B cell (primary cell): ENCODE measurements at regions of chr2 and their contacts with region 1.

Region 1: GRCh38 chr2:216034065-216034464 is 20.7 kb upstream of the MREG start:
- DNase-seq: peak; percentile 81
- ATAC-seq: peak; percentile 85
- H3K4me3 ChIP-seq: no peak overlapping the region
- H3K4me3 Mint-ChIP-seq: no peak overlapping the region
- H3K27ac ChIP-seq: no peak overlapping the region
- H3K27ac Mint-ChIP-seq: no peak overlapping the region
- H3K4me1 ChIP-seq: peaks cover 0 to 5% of the 10 kb centered on the region in 2 donors
- H3K4me1 Mint-ChIP-seq: peaks cover 8% of the 10 kb centered on the region
- H3K27me3 ChIP-seq: no peaks in the 10 kb centered on the region
- H3K27me3 Mint-ChIP-seq: no peaks in the 10 kb centered on the region
- CTCF ChIP-seq: peak; percentile 93

Region 2: DNA sequence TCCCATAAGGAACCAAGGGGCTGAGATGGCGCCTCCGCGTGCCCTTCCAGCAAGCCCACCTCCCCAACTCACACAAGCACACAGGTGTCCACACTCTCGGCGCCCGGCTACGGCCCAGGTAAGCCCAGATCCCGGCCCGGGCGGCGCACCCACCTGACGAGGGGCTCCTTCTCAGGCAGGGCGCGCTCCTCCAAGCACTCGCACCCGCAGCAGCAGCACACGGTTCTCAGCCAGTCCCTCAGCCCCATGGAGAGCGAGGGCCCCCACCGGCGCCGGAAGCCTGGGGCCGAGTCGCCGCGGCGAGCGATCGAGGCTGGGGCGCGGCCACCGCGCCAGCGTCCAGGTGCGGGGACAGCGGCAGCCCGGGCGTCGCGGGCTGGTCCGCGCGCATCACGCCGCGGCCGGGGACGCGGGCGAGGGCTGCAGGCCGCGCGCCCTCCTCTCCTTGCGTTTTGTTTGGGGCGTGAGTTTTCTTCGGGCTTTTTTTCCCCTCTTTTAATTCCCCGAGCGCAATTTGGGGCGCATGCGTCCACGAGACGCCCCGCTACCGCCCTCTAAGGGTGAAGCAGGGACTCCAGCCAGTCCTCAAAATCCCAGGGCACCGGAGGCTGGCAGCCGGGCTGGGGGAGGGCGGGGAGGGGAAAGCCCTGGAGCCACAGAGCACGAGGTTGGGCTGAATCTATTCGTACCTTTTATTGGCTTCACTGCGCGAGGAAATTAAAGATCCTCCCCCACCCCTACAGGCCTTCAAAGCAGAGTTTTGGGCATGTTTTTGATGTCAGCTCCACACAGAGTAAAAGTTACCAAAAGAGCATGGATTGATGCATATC is 20.8 kb before region 1 on chr2 and contains the start of gene MREG:
- CTCF ChIA-PET with region 1: interaction called, 8 read pairs
- POLR2A ChIA-PET with region 1: no interaction called
- intact Hi-C with region 1: loop called (anchors 2 kb)
- DNase-seq: peak; percentile 90
- ATAC-seq: peak; percentile 82
- H3K4me3 ChIP-seq: peak within 1 kb of the TSS; percentile 47 to 80 (median 69)
- H3K4me3 Mint-ChIP-seq: peak within 1 kb of the TSS; percentile 93
- H3K27ac ChIP-seq: peak within 1 kb of the TSS; percentile 20 to 61
- H3K27ac Mint-ChIP-seq: peak within 1 kb of the TSS; percentile 84
- H3K4me1 ChIP-seq: peaks cover 30 to 41% of the 10 kb centered on the region in 2 donors
- H3K4me1 Mint-ChIP-seq: peaks cover 49% of the 10 kb centered on the region
- H3K27me3 ChIP-seq: no peaks in the 10 kb centered on the region
- H3K27me3 Mint-ChIP-seq: no peaks in the 10 kb centered on the region
- CTCF ChIP-seq: peak; percentile 74
- total RNA-seq, gene MREG: 5.7 and 6.3 TPM in 2 replicates

Region 3: DNA sequence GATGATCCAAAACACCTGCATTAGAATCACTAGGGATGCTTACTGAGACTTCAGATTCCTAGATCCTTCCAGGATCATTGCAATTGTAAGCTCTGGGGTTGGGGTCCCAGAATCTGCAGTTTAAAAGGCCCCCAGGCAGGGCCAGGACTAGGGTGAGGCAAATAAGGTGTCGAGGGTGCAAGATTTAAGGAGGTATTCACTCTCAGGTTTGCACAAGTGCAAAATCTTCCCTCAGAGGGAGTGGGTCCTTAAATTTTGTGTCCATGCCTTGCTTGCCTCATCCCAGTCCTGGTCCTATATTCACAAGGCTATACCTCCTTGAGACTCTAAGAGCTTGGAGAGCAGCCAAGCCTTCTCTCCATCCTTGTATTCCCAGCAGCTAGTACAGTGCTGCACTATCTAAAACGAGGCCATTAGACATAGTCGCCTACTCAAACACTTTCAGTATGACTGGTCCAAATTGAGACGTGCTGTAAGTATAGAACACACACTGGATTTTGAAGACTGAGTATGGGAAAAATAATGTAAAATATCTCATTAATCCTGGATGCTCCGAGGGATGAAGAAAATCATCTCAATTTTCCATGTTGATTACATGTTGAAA is 10.9 kb after region 1 on chr2:
- CTCF ChIA-PET with region 1: interaction called, 14 read pairs
- POLR2A ChIA-PET with region 1: no interaction called
- intact Hi-C with region 1: no loop called
- DNase-seq: no peak
- ATAC-seq: no peak
- H3K4me3 ChIP-seq: no peak overlapping the region
- H3K4me3 Mint-ChIP-seq: no peak overlapping the region
- H3K27ac ChIP-seq: no peak overlapping the region
- H3K27ac Mint-ChIP-seq: no peak overlapping the region
- H3K4me1 ChIP-seq: no peaks in the 10 kb centered on the region
- H3K4me1 Mint-ChIP-seq: no peaks in the 10 kb centered on the region
- H3K27me3 ChIP-seq: no peaks in the 10 kb centered on the region
- H3K27me3 Mint-ChIP-seq: no peaks in the 10 kb centered on the region
- CTCF ChIP-seq: no peak

Region 4: GRCh38 chr2:216081487-216082116 is 47.5 kb after region 1 on chr2 and contains the starts of genes PECR and TMEM169:
- CTCF ChIA-PET with region 1: interaction called, 17 read pairs
- POLR2A ChIA-PET with region 1: no interaction called
- intact Hi-C with region 1: no loop called
- DNase-seq: peak; percentile 76
- ATAC-seq: peak; percentile 97
- H3K4me3 ChIP-seq: peak within 1 kb of the TSS; percentile 63 to 87 (median 79)
- H3K4me3 Mint-ChIP-seq: peak within 1 kb of the TSS; percentile 91
- H3K27ac ChIP-seq: peak within 1 kb of the TSS; percentile 51 to 68
- H3K27ac Mint-ChIP-seq: peak within 1 kb of the TSS; percentile 80
- H3K4me1 ChIP-seq: peaks cover 40 to 41% of the 10 kb centered on the region in 2 donors
- H3K4me1 Mint-ChIP-seq: peaks cover 45% of the 10 kb centered on the region
- H3K27me3 ChIP-seq: no peaks in the 10 kb centered on the region
- H3K27me3 Mint-ChIP-seq: no peaks in the 10 kb centered on the region
- CTCF ChIP-seq: no peak
- total RNA-seq, gene PECR: 15.6 and 16.5 TPM in 2 replicates
- total RNA-seq, gene TMEM169: 0.84 and 1.2 TPM in 2 replicates

Region 5: DNA sequence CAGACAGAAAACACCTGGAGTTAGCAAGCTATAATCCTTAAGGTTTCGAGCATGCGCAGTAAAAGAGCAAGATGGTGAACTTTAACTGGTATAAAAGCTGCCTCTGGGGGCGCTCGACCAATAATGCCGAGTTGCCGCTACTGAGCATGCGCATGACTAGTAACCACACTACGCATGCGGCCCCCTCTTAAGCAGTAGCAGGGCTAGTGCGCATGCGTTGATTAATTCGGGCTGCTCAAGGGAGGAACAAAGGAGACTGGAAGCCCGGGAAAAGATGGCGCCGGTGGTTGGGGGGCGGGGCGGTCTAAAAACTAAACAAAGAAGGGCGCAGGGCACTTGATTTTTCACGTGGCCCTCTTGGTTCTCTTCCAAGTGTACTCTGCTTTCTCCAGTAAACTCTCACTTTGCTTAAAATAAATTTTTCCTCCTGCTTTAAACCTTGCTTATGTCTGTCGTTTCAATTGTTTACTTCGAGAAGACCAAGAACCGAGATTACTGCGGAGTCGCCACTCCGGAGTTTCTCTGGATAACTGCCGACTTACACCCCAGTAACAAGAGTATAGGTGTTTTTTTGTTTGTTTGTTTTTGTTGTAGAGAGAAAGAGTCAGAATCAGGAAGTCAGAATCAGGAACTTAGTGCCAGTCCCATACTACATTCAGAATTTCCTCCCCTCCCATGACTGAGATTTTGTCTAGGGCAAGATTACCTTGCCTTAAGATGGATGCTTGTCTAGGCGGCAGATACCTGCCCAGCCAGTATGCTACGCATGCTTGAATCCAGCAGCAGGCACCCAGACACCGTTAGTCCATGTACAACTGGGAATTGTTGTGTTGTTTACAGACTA is 80.9 kb after region 1 on chr2:
- CTCF ChIA-PET with region 1: interaction called, 21 read pairs
- POLR2A ChIA-PET with region 1: no interaction called
- intact Hi-C with region 1: loop called (anchors 1 kb)
- DNase-seq: peak; percentile 99
- ATAC-seq: peak; percentile 90
- H3K4me3 ChIP-seq: peak overlapping the region; percentile 52 to 90 (median 69)
- H3K4me3 Mint-ChIP-seq: peak overlapping the region; percentile 93
- H3K27ac ChIP-seq: peak overlapping the region; percentile 80 to 96
- H3K27ac Mint-ChIP-seq: peak overlapping the region; percentile 98
- H3K4me1 ChIP-seq: peaks cover 32 to 37% of the 10 kb centered on the region in 2 donors
- H3K4me1 Mint-ChIP-seq: peaks cover 71% of the 10 kb centered on the region
- H3K27me3 ChIP-seq: no peaks in the 10 kb centered on the region
- H3K27me3 Mint-ChIP-seq: no peaks in the 10 kb centered on the region
- CTCF ChIP-seq: peak; percentile 88

Region 6: DNA sequence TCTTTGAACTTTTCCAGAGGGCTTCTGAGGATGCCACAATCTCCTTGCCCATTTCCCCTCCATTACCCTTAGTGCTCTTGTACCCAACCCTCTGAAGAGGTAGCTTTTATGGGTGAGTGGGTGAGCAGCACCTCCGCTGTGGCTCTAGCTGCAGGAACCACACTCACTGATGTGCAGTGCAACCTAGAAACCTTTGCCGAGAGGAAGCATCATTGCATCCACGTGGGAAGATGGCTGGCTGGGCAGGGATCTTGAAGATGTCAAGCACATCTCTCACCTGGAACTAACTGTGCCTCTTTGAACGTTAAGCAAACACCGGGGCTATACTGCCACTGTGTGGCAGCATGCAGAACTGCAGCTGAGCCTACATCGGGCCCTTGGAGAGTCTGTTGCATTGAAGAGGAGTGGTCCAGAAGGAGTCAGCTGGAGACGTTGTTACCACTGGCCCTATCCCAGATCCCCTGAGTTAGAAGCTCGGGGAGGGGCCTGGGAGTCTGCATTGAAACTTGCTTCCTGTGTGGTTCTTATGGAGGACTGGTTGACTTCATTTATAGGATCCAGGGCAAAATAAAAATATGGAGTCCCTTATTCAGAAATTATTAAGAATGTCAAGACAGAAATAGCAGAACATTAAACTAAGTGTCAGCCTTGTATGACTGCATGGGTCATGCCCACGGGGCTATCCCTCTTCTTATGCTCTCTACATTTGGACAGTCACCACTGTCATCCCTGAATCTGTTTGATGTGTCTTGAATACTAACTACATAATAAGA is 632.6 kb after region 1 on chr2:
- CTCF ChIA-PET with region 1: interaction called, 31 read pairs
- POLR2A ChIA-PET with region 1: no interaction called
- intact Hi-C with region 1: no loop called
- DNase-seq: peak; percentile 71
- ATAC-seq: peak; percentile 86
- H3K4me3 ChIP-seq: no peak overlapping the region
- H3K4me3 Mint-ChIP-seq: no peak overlapping the region
- H3K27ac ChIP-seq: no peak overlapping the region
- H3K27ac Mint-ChIP-seq: no peak overlapping the region
- H3K4me1 ChIP-seq: no peaks in the 10 kb centered on the region
- H3K4me1 Mint-ChIP-seq: no peaks in the 10 kb centered on the region
- H3K27me3 ChIP-seq: peaks cover 0 to 17% (median 1%) of the 10 kb centered on the region in 4 experiments
- H3K27me3 Mint-ChIP-seq: peaks cover 34% of the 10 kb centered on the region
- CTCF ChIP-seq: peak; percentile 98